ENCODE measurements at regions of chr17 and their contacts with region 1.

Region 1: DNA sequence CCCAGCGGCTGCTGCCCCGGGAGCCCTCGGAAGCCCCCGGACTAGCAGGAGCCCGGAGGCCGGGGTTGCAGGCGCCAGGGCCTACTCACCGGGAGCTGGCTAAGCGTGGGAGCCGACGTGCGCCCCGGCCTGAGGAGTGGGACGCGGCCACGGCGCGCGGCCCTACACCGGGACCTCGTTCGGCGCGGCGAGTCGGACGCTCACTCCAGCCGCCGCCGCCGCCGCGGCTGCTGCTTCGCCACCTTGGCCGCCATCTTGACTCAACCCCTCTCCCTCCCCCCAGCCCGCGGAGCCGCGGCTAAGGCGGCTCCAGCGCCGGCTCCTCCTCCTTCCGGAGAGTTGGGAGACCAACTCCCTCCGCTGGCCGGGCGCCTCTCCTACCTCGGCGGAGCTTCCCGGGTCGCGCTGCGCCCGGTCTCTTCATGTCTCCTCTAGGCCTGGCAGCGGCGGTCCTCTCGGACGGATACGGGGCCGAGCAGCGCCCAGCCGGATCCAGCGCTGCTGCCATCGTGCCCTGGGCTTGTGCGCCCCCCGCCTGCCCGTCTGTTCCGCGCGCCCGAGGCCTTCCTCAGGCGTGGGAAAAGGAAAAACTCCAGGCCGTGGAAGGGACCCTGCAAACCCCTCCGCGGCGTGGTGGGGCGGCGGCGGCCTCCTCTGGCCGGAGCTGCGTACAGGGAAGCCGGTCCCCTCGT is at the start of gene NCOR1:
- DNase-seq: peak; percentile 98
- ATAC-seq: peak; percentile 82
- H3K4me3 ChIP-seq: peak within 1 kb of the TSS; percentile 94
- H3K27ac ChIP-seq: peak within 1 kb of the TSS; percentile 86
- H3K4me1 ChIP-seq: peaks cover 32% of the 10 kb centered on the region
- H3K27me3 ChIP-seq: no peaks in the 10 kb centered on the region
- CTCF ChIP-seq: peak; percentile 37; the same call in 1 of the 2 replicates
- total RNA-seq, gene NCOR1: 127 and 204 TPM in 2 replicates

Region 2: DNA sequence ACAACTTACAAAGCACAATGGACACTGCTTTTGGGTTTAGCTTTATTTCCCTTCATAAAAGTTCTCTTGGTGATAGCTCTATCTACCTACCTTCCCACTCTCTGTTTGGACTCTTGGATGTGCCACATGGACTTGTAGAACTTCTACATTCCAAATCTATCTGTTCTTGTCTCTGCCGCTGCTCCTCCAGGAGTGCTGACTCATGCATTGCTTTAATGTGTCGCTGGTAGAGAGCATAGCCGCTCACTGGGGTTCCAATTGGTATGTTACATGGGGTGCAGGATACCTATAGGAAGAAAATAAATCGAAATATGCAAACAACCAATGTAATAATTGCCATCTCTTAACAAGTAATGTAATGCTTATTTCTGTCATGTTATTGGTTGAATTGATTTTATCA is 123.6 kb before region 1 on chr17:
- CTCF ChIA-PET with region 1: no interaction called
- POLR2A ChIA-PET with region 1: no interaction called
- intact Hi-C with region 1: no loop called
- DNase-seq: no peak
- ATAC-seq: no peak
- H3K4me3 ChIP-seq: no peak overlapping the region
- H3K27ac ChIP-seq: no peak overlapping the region
- H3K4me1 ChIP-seq: no peaks in the 10 kb centered on the region
- H3K27me3 ChIP-seq: no peaks in the 10 kb centered on the region
- CTCF ChIP-seq: no peak

Region 3: GRCh38 chr17:16106161-16106891 is 109.1 kb before region 1 on chr17:
- CTCF ChIA-PET with region 1: no interaction called
- POLR2A ChIA-PET with region 1: no interaction called
- intact Hi-C with region 1: loop called (anchors 10 kb)
- DNase-seq: no peak
- ATAC-seq: no peak
- H3K4me3 ChIP-seq: no peak overlapping the region
- H3K27ac ChIP-seq: no peak overlapping the region
- H3K4me1 ChIP-seq: peaks cover 18% of the 10 kb centered on the region
- H3K27me3 ChIP-seq: no peaks in the 10 kb centered on the region
- CTCF ChIP-seq: no peak

Region 4: GRCh38 chr17:16171616-16172015 is 43.8 kb before region 1 on chr17:
- CTCF ChIA-PET with region 1: no interaction called
- POLR2A ChIA-PET with region 1: no interaction called
- intact Hi-C with region 1: loop called (anchors 5 kb)
- DNase-seq: peak; percentile 99
- ATAC-seq: peak; percentile 99
- H3K4me3 ChIP-seq: peak overlapping the region; percentile 54; the same call in 1 of the 2 replicates
- H3K27ac ChIP-seq: peak overlapping the region; percentile 94
- H3K4me1 ChIP-seq: peaks cover 31% of the 10 kb centered on the region
- H3K27me3 ChIP-seq: no peaks in the 10 kb centered on the region
- CTCF ChIP-seq: no peak

Measured in PC-3 (cell line).